Panc1 (cell line): ENCODE measurements at regions of chr3 and their contacts with region 1.

Region 1: GRCh38 chr3:136171097-136171542 is 25.0 kb downstream of the MSL2 start:
- DNase-seq: no peak
- ATAC-seq: peak; percentile 72
- H3K4me3 ChIP-seq: no peak overlapping the region
- H3K27ac ChIP-seq: no peak overlapping the region
- H3K4me1 ChIP-seq: peaks cover 15% of the 10 kb centered on the region; the same call in 1 of the 2 replicates
- H3K27me3 ChIP-seq: no peaks in the 10 kb centered on the region
- CTCF ChIP-seq: no peak

Region 2: GRCh38 chr3:135834465-135834864 is 336.7 kb before region 1 on chr3:
- CTCF ChIA-PET with region 1: no interaction called
- POLR2A ChIA-PET with region 1: no interaction called
- in situ Hi-C with region 1: no loop called
- intact Hi-C with region 1: no loop called
- DNase-seq: no peak
- ATAC-seq: no peak
- H3K4me3 ChIP-seq: no peak overlapping the region
- H3K27ac ChIP-seq: no peak overlapping the region
- H3K4me1 ChIP-seq: no peaks in the 10 kb centered on the region
- H3K27me3 ChIP-seq: 0 out of 2 replicates have a peak, but pooled peaks cover 2% of the 10 kb centered on the region
- CTCF ChIP-seq: no peak

Region 3: GRCh38 chr3:135944831-135945592 is 226.1 kb before region 1 on chr3:
- CTCF ChIA-PET with region 1: no interaction called
- POLR2A ChIA-PET with region 1: no interaction called
- in situ Hi-C with region 1: no loop called
- intact Hi-C with region 1: no loop called
- DNase-seq: no peak
- ATAC-seq: no peak
- H3K4me3 ChIP-seq: no peak overlapping the region
- H3K27ac ChIP-seq: no peak overlapping the region
- H3K4me1 ChIP-seq: no peaks in the 10 kb centered on the region
- H3K27me3 ChIP-seq: peaks cover 4% of the 10 kb centered on the region; the same call in 1 of the 2 replicates
- CTCF ChIP-seq: no peak

Region 4: GRCh38 chr3:136075218-136075808 is 95.8 kb before region 1 on chr3:
- CTCF ChIA-PET with region 1: no interaction called
- POLR2A ChIA-PET with region 1: no interaction called
- in situ Hi-C with region 1: no loop called
- intact Hi-C with region 1: no loop called
- DNase-seq: peak; percentile 69
- ATAC-seq: peak; percentile 79
- H3K4me3 ChIP-seq: no peak overlapping the region
- H3K27ac ChIP-seq: no peak overlapping the region
- H3K4me1 ChIP-seq: peaks cover 15% of the 10 kb centered on the region
- H3K27me3 ChIP-seq: no peaks in the 10 kb centered on the region
- CTCF ChIP-seq: peak; percentile 90; the same call in 1 of the 2 replicates

Region 5: DNA sequence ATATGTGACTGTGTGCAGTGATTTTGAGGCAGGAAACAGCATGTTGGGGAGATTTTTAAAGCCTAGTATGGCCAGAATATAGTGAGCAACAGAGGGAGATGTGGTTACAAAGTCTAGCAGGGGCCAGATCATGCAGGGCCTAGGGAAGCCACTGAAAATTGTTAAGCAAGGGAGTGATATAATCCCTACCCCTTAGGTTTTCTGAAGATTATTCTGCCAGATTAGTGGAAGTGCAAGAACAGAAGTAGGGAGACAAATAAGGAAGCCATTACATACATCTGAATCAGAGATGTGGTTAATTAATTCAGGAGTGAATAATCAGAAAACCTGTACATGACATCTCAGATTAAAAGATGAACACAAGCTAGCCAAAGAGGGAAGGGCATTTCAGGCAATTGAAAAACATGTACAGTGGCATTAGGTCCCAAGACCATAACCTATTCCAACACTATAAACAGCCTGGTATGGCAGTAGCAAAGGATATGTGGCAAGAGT is 29.8 kb before region 1 on chr3:
- CTCF ChIA-PET with region 1: no interaction called
- POLR2A ChIA-PET with region 1: no interaction called
- in situ Hi-C with region 1: no loop called
- intact Hi-C with region 1: no loop called
- DNase-seq: no peak
- ATAC-seq: no peak
- H3K4me3 ChIP-seq: no peak overlapping the region
- H3K27ac ChIP-seq: peak overlapping the region; percentile 68
- H3K4me1 ChIP-seq: peaks cover 18% of the 10 kb centered on the region
- H3K27me3 ChIP-seq: no peaks in the 10 kb centered on the region
- CTCF ChIP-seq: no peak

Region 6: GRCh38 chr3:136186344-136186743 is 15.2 kb after region 1 on chr3:
- CTCF ChIA-PET with region 1: interaction called, 11 read pairs
- POLR2A ChIA-PET with region 1: no interaction called
- in situ Hi-C with region 1: no loop called
- intact Hi-C with region 1: no loop called
- DNase-seq: no peak
- ATAC-seq: peak; percentile 66
- H3K4me3 ChIP-seq: no peak overlapping the region
- H3K27ac ChIP-seq: no peak overlapping the region
- H3K4me1 ChIP-seq: peaks cover 56% of the 10 kb centered on the region
- H3K27me3 ChIP-seq: no peaks in the 10 kb centered on the region
- CTCF ChIP-seq: no peak

Region 7: DNA sequence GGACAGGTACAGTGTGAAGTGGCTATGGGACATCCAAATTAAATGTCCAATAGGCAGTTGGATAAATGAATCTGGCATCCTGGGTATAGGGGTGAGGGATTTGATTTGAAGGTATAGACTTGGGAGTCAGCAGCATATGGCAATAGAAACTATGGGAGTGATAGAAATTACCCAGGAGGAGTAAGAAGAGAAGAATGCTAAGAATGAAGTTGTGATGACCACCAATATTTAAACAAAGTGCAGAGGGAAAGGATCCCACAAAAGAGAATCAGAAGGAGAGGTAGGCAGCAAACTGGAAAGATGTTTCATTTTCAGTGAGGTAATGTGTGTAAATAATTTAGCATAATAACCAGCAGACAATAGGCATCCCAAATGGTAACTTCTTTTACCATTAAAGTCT is 38.8 kb after region 1 on chr3:
- CTCF ChIA-PET with region 1: no interaction called
- POLR2A ChIA-PET with region 1: no interaction called
- in situ Hi-C with region 1: loop called (anchors 5 kb)
- intact Hi-C with region 1: no loop called
- DNase-seq: no peak
- ATAC-seq: peak; percentile 46; the same call in 1 of the 2 replicates
- H3K4me3 ChIP-seq: no peak overlapping the region
- H3K27ac ChIP-seq: no peak overlapping the region
- H3K4me1 ChIP-seq: no peaks in the 10 kb centered on the region
- H3K27me3 ChIP-seq: no peaks in the 10 kb centered on the region; the same call in 1 of the 2 replicates
- CTCF ChIP-seq: no peak